HCT116 (cell line): ENCODE measurements at regions of chr6 and their contacts with region 1.

Region 1: DNA sequence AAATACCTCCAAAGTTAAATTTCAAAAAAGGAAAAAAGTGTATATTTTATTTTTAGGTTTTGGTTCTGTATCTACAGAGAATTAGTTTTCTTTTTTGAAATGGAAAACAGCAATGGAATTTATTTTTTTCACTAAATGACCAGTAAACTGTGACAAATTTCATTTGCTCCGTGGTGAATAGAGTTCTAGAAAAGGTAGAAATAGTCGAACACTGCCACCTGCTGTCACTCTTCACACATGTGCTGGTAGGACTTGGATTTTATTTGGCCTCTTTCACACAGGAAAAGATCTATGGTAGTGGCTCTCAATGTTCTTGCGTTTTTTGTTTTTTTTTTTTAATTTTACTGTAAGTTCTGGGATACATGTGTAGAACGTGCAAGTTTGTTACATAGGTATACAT is 312.5 kb downstream of the EYA4 start:
- DNase-seq: peak; percentile 56
- ATAC-seq: peak; percentile 86
- H3K4me3 ChIP-seq: no peak overlapping the region
- H3K27ac ChIP-seq: no peak overlapping the region
- H3K4me1 ChIP-seq: 0 out of 4 replicates have a peak, but pooled peaks cover 0 to 3% of the 10 kb centered on the region in 2 experiments
- H3K27me3 ChIP-seq: no peaks in the 10 kb centered on the region
- CTCF ChIP-seq: peak; percentile 54 to 64 (median 63)
- POLR2A ChIP-seq: no peak
- RAD21 ChIP-seq: peak; percentile 77

Region 2: GRCh38 chr6:133184798-133185372 is 368.8 kb before region 1 on chr6:
- CTCF ChIA-PET with region 1: interaction called, 4 read pairs
- POLR2A ChIA-PET with region 1: no interaction called
- RAD21 ChIA-PET with region 1: no interaction called
- intact Hi-C with region 1: loop called (anchors 5 kb)
- DNase-seq: no peak
- ATAC-seq: peak; percentile 57; the same call in 1 of the 2 replicates
- H3K4me3 ChIP-seq: no peak overlapping the region
- H3K27ac ChIP-seq: no peak overlapping the region
- H3K4me1 ChIP-seq: no peaks in the 10 kb centered on the region
- H3K27me3 ChIP-seq: peaks cover 21% of the 10 kb centered on the region
- CTCF ChIP-seq: peak; percentile 38 to 69 (median 50); a peak in 5 of 6 replicates
- POLR2A ChIP-seq: no peak
- RAD21 ChIP-seq: peak; percentile 58

Region 3: GRCh38 chr6:133286765-133287164 is 266.9 kb before region 1 on chr6:
- CTCF ChIA-PET with region 1: no interaction called
- POLR2A ChIA-PET with region 1: no interaction called
- RAD21 ChIA-PET with region 1: no interaction called
- intact Hi-C with region 1: loop called (anchors 5 kb)
- DNase-seq: no peak
- ATAC-seq: peak; percentile 75
- H3K4me3 ChIP-seq: no peak overlapping the region
- H3K27ac ChIP-seq: no peak overlapping the region
- H3K4me1 ChIP-seq: no peaks in the 10 kb centered on the region
- H3K27me3 ChIP-seq: no peaks in the 10 kb centered on the region
- CTCF ChIP-seq: peak; percentile 37 to 57 (median 49); a peak in 5 of 6 replicates
- POLR2A ChIP-seq: no peak
- RAD21 ChIP-seq: peak; percentile 51